ENCODE measurements at regions of chr7 and their contacts with region 1.

Region 1: DNA sequence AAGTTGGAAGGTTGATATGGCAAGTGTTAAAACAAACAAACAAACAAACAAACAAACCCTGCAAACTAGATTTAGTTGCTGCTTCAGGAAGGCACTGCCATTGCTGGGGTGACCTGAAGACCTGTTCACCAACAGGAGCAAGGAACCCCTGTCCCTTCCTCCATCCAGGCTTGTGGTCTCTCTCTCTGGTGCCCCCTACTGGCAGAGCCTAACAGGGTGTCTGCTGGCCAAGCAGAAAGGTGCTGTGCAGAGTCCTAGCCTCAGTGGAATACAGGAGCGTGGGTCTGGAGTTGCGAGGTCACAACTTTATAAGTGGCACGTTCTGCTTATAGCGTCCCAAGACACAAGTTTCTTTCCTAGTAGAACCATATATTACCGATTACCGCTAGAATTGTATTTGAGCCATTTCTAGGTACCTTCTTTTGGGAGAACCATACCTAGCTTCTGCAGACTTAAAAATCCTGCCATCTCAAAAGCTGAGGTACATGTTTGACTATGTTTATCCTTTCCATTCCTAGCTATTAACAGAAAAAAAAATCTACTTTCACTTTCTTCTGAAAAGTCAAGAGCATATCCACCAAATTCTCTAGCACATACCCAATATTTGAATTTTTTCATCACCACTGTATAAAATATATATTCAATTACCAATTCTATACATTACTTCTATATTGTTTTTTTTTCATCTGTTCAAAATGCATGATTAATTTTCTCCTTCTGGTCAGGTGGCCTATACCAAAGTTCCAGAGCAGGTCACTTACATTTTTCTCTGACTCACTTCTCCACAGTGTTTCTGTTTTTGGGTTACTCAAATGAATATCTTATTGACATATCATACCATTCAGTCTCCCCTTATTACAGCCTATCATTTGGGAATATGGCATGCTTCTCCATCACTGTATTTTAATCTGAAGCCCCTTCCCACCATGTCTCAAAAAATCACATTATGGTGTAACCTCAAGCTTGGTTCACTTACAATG is 29.1 kb upstream of the CALD1 start:
- DNase-seq: no peak
- H3K4me3 ChIP-seq: no peak overlapping the region
- H3K27me3 ChIP-seq: no peaks in the 10 kb centered on the region
- CTCF ChIP-seq: peak; percentile 80

Region 2: GRCh38 chr7:134646425-134647305 is 103.7 kb before region 1 on chr7 and contains the start of gene BPGM:
- CTCF ChIA-PET with region 1: no interaction called
- POLR2A ChIA-PET with region 1: no interaction called
- DNase-seq: peak; percentile 100
- H3K4me3 ChIP-seq: peak within 1 kb of the TSS; percentile 66
- H3K27me3 ChIP-seq: no peaks in the 10 kb centered on the region
- CTCF ChIP-seq: peak; percentile 37
- polyA plus RNA-seq, gene BPGM: 14.1 and 25.0 TPM in 2 replicates

Region 3: DNA sequence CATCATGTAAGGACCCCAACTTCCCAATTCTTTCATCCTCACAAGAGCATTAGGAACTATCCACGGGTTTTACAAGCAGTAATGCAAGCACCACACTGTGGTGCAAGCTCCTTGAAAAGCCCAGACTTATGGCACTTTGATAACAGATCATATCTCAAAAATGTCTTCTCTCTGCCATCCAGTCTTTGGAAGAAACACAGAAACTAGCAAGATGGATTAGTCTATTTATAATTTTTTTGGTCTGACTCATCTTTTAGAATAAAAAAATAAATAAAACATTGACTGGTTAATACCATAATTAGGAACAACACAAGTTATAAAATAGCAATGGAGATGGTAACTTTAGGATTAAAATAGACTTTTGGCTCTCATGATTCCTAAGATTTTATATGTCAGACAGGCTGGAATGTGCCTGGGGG is 20.0 kb before region 1 on chr7:
- CTCF ChIA-PET with region 1: interaction called, 32 read pairs
- POLR2A ChIA-PET with region 1: no interaction called
- DNase-seq: peak; percentile 56
- H3K4me3 ChIP-seq: no peak overlapping the region
- H3K27me3 ChIP-seq: no peaks in the 10 kb centered on the region
- CTCF ChIP-seq: no peak

Measured in BJ (cell line).